Gastrocnemius medialis (tissue), 4 donors: ENCODE measurements at regions of chr6 and their contacts with region 1.

Region 1: GRCh38 chr6:43776115-43776798 is 6.2 kb downstream of the VEGFA start:
- DNase-seq: peak in 1 of 2 donors; percentile 72
- ATAC-seq: peak in 1 of 2 donors; percentile 7
- H3K4me3 ChIP-seq: peak overlapping the region in 2 of 4 donors; percentile 4 to 90
- H3K27ac ChIP-seq: peak overlapping the region; percentile 94 to 100 (median 98)
- H3K4me1 ChIP-seq: peaks cover 56 to 59% of the 10 kb centered on the region in 2 donors
- H3K27me3 ChIP-seq: no peaks in the 10 kb centered on the region
- CTCF ChIP-seq: no peak
- POLR2A ChIP-seq: no peak

Region 2: DNA sequence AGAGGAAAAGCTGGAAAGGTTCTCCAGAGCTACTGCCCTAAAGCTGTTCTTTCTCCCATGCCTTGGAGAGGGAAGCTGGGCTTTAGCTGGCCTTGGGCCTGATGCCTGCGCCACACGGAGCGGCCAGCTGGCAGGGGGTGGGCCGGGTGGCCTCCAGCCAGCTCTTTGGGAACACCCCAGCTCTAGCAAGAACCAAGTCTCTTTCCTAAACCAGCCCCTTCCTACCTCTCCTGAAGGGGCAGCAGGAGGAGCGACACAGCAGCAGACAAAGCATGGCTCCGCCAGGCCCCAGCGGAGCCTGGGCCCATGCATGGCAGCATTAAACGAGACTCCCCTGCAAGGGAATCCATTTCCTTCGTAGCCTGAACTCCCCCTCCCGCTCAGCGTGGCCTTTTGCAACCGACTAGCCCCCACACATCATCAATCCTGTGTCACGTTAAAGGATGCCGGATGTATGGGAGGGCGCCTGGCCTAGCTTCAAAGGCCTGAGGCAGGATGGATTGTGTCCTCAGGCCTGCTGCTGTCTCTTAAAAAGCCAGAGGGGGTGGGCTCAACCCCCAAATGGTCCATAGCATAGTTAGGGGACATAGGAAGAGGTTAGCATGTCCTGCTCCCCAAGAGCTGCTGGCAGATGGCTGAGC is 102.7 kb before region 1 on chr6:
- in situ Hi-C with region 1: no loop called
- intact Hi-C with region 1: loop called (anchors 1 kb)
- DNase-seq: peak in 1 of 2 donors; percentile 79
- ATAC-seq: no peak
- H3K4me3 ChIP-seq: no peak overlapping the region
- H3K27ac ChIP-seq: peak overlapping the region; percentile 95 to 97 (median 96)
- H3K4me1 ChIP-seq: peaks cover 88 to 96% of the 10 kb centered on the region in 2 donors
- H3K27me3 ChIP-seq: no peaks in the 10 kb centered on the region
- CTCF ChIP-seq: no peak
- POLR2A ChIP-seq: no peak

Region 3: GRCh38 chr6:43798688-43799444 is 22.6 kb after region 1 on chr6:
- in situ Hi-C with region 1: no loop called
- intact Hi-C with region 1: loop called (anchors 1 kb)
- DNase-seq: peak; percentile 98 to 99
- ATAC-seq: peak; percentile 88 to 91
- H3K4me3 ChIP-seq: no peak overlapping the region
- H3K27ac ChIP-seq: peak overlapping the region; percentile 91 to 96 (median 92)
- H3K4me1 ChIP-seq: peaks cover 47 to 59% of the 10 kb centered on the region in 2 donors
- H3K27me3 ChIP-seq: no peaks in the 10 kb centered on the region
- CTCF ChIP-seq: peak in 1 of 5 experiments; percentile 34
- POLR2A ChIP-seq: peak; percentile 88 to 94

Region 4: GRCh38 chr6:43916924-43917877 is 140.9 kb after region 1 on chr6:
- in situ Hi-C with region 1: no loop called
- intact Hi-C with region 1: no loop called
- DNase-seq: peak; percentile 11 to 49
- ATAC-seq: peak; percentile 85 to 91
- H3K4me3 ChIP-seq: no peak overlapping the region
- H3K27ac ChIP-seq: peak overlapping the region in 3 of 4 donors; percentile 17 to 54 (median 22)
- H3K4me1 ChIP-seq: peaks cover 6 to 13% of the 10 kb centered on the region in 2 donors
- H3K27me3 ChIP-seq: no peaks in the 10 kb centered on the region
- CTCF ChIP-seq: no peak
- POLR2A ChIP-seq: no peak

Region 5: DNA sequence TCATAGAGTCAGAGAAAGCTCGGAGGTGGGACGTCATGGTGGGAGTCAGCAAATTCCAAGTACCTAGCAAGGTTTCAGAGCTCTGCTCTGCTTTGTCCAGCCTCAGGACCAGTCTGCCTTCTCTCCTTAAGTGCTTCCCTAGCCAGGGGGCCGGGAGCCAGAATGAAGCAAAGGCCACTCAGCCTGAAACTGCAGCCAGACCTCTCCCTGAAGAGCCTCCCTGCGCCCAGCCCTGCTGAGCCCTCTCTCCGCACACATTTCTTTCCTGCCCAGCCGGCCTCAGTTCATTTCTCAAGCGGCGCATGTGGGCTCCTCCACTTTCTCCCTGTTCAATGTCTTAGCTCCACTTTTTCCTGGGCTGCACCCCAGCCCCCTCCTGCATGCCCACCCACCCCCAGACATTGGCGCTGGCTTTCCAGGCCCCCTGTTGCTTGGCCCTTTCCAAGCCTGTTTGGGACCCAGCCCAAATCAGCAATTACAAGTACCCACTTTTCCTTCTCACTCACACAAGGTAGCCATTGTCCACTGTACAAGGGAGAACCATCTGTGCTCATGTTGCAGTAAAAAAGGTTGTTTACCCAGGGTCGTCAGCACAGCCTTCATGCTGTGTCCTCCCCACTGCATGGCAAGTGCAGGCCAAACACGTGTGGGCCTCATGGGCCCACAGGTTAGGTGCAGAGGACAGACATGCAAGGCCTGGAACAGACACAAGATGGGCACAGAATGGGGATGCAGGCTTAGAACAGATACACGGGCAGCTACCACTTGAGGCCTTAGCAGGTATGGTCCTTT is 203.9 kb after region 1 on chr6:
- in situ Hi-C with region 1: no loop called
- intact Hi-C with region 1: no loop called
- DNase-seq: no peak
- ATAC-seq: peak in 1 of 2 donors; percentile 10
- H3K4me3 ChIP-seq: no peak overlapping the region
- H3K27ac ChIP-seq: no peak overlapping the region
- H3K4me1 ChIP-seq: peaks cover 19 to 23% of the 10 kb centered on the region in 2 donors
- H3K27me3 ChIP-seq: no peaks in the 10 kb centered on the region
- CTCF ChIP-seq: no peak
- POLR2A ChIP-seq: no peak